CD4-positive, alpha-beta T cell (primary cell): ENCODE measurements at regions of chr9 and their contacts with region 1.

Region 1: DNA sequence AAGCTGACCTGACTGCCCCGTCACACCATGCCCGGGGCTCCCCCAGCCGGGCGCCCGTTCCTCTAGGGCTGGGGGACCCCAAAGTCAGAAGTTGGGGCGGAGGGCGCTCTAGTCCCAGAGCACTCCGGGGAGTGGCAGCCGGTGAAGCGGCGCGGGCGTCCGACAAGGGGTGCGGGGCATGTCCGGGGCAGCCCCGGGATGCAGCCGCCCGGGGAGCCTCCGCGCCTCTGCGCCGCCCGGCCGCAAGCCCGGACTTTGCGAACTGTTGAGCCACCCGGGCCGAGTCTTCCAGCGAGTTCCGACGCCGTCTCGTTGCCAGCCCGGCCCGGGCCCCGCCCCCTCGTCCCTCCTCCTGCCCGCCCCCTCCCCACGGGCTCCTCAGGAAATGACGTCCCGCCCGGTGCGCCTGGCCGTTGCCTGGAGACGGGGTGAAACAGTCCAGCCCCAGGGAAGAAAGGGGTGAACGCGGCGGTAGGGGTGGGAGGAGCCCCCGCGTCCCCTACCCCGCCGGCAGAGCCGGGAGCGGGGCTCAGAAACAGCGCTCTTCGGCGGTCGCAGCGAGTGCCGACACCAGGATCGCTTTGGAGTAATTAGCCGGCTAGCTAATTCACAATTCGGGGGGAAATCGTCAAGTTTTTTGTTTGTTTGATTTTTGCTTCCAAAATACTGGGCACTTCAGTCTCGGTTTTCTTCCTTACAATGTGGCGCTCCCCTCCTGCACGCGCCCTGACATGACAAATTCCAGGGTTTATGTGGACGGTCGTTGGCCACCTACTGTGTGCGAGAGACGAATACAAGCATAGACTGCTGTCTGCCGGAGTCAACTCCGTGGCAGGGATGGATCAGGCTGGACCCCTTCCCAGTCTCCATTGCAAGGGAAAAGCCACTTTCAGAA is at the start of gene WHRN:
- DNase-seq: peak; percentile 79 to 97 (median 88)
- ATAC-seq: peak; percentile 86
- H3K4me3 ChIP-seq: peak within 1 kb of the TSS; percentile 67
- H3K4me3 Mint-ChIP-seq: peak within 1 kb of the TSS; percentile 89
- H3K27ac ChIP-seq: peak within 1 kb of the TSS in 1 of 2 donors; percentile 46
- H3K27ac Mint-ChIP-seq: peak within 1 kb of the TSS; percentile 80
- H3K4me1 ChIP-seq: peaks cover 34% of the 10 kb centered on the region
- H3K4me1 Mint-ChIP-seq: peaks cover 37% of the 10 kb centered on the region
- H3K27me3 ChIP-seq: peaks cover 2 to 5% of the 10 kb centered on the region in 2 experiments
- H3K27me3 Mint-ChIP-seq: peaks cover 30% of the 10 kb centered on the region
- CTCF ChIP-seq: no peak
- total RNA-seq, gene WHRN: 19.9 to 20.5 TPM

Region 2: DNA sequence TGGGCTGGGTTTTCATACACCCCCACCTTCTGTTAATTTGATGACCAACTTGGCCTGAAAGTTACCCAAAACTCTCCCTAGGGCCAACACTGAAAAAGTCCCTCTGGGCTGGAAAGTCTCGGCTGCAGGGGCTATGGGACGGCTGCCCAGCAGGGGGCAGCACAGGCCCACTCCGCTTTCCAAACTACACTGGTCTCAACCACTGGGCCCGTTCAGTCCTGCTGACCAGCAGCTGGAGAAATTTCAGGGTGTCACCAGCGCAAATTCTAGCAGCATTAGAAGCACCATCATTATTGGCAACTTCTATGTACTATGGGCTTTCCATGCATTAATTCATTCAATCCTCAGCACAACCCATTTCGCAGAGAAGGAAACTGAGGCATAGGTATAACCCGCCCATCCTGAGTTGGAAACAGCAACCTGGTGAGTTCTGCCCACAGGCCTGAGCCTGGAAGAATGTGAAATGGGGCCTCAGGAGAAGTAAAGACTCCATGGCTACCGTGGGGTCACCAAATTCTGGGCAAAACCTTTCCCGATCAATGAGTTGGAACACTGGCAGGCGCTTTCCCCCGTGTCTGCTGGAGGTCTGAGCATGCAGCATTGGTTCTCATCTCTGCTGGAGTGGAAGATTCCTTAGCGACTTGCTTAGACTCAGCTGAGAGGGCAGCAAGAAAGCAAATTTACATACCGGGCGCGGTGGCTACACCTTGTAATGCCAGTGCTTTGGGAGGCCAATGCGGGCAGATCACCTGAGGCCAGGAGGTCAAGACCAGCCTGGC is 166.1 kb before region 1 on chr9:
- CTCF ChIA-PET with region 1: interaction called, 4 read pairs
- POLR2A ChIA-PET with region 1: no interaction called
- intact Hi-C with region 1: loop called (anchors 2 to 5 kb)
- DNase-seq: peak; percentile 23 to 75 (median 44)
- ATAC-seq: peak; percentile 67
- H3K4me3 ChIP-seq: no peak overlapping the region
- H3K4me3 Mint-ChIP-seq: no peak overlapping the region
- H3K27ac ChIP-seq: peak overlapping the region in 1 of 2 donors; percentile 40
- H3K27ac Mint-ChIP-seq: peak overlapping the region; percentile 62
- H3K4me1 ChIP-seq: peaks cover 11% of the 10 kb centered on the region
- H3K4me1 Mint-ChIP-seq: peaks cover 16% of the 10 kb centered on the region
- H3K27me3 ChIP-seq: no peaks in the 10 kb centered on the region
- H3K27me3 Mint-ChIP-seq: no peaks in the 10 kb centered on the region
- CTCF ChIP-seq: peak; percentile 89

Region 3: GRCh38 chr9:114397848-114398605 is 107.4 kb before region 1 on chr9:
- CTCF ChIA-PET with region 1: interaction called, 3 read pairs
- POLR2A ChIA-PET with region 1: no interaction called
- intact Hi-C with region 1: loop called in 1 of 2 experiments (anchors 1 kb)
- DNase-seq: peak; percentile 90 to 98 (median 96)
- ATAC-seq: peak; percentile 84
- H3K4me3 ChIP-seq: peak overlapping the region; percentile 99
- H3K4me3 Mint-ChIP-seq: peak overlapping the region; percentile 97
- H3K27ac ChIP-seq: peak overlapping the region; percentile 93 to 94
- H3K27ac Mint-ChIP-seq: peak overlapping the region; percentile 98
- H3K4me1 ChIP-seq: peaks cover 53% of the 10 kb centered on the region
- H3K4me1 Mint-ChIP-seq: peaks cover 45% of the 10 kb centered on the region
- H3K27me3 ChIP-seq: no peaks in the 10 kb centered on the region
- H3K27me3 Mint-ChIP-seq: no peaks in the 10 kb centered on the region
- CTCF ChIP-seq: no peak

Region 4: DNA sequence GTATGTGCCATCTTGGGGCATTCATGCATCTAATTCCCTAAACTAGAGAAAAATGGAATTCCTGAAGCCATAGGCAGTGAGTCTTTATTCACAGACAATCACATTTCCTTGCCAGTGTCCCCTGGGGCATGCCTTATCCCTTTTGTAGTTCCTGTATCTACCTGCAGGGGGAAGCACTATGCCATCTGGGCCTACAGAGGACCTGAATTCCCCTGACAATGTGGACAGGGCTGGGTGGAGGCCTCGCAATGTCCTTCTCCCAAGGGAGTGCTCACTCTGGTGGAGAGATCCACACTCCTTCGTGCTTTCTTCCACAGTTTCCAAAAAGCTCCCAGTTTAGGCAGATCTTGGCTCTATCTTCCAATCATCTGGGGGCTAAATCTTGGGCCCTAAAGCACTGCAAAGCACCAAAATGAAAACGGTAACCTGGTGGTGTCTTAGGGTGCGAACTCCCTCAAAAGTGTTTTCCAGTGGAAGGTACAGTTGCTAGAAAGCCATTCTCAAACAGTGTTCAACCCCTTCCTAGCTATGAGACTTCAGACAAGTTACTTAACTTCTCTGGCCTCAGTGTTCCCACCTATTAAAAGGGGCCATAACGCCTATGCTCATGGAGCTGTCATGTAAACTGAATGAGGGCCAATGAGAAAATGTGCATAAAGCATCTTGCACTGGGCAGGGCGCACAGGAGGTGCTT is 17.7 kb before region 1 on chr9:
- CTCF ChIA-PET with region 1: interaction called, 8 read pairs
- POLR2A ChIA-PET with region 1: interaction called, 4 read pairs
- intact Hi-C with region 1: loop called in 1 of 2 experiments (anchors 1 kb)
- DNase-seq: peak; percentile 32 to 86 (median 48)
- ATAC-seq: peak; percentile 90
- H3K4me3 ChIP-seq: no peak overlapping the region
- H3K4me3 Mint-ChIP-seq: no peak overlapping the region
- H3K27ac ChIP-seq: no peak overlapping the region
- H3K27ac Mint-ChIP-seq: no peak overlapping the region
- H3K4me1 ChIP-seq: peaks cover 22% of the 10 kb centered on the region
- H3K4me1 Mint-ChIP-seq: peaks cover 11% of the 10 kb centered on the region
- H3K27me3 ChIP-seq: no peaks in the 10 kb centered on the region
- H3K27me3 Mint-ChIP-seq: no peaks in the 10 kb centered on the region
- CTCF ChIP-seq: peak; percentile 85

Region 5: GRCh38 chr9:114906908-114907571 is 401.6 kb after region 1 on chr9:
- CTCF ChIA-PET with region 1: no interaction called
- POLR2A ChIA-PET with region 1: no interaction called
- intact Hi-C with region 1: loop called in 1 of 2 experiments (anchors 10 kb)
- DNase-seq: peak in 4 of 14 experiments; percentile 34 to 66 (median 56)
- ATAC-seq: no peak
- H3K4me3 ChIP-seq: no peak overlapping the region
- H3K4me3 Mint-ChIP-seq: no peak overlapping the region
- H3K27ac ChIP-seq: peak overlapping the region in 1 of 2 donors; percentile 7
- H3K27ac Mint-ChIP-seq: peak overlapping the region; percentile 85
- H3K4me1 ChIP-seq: peaks cover 84% of the 10 kb centered on the region
- H3K4me1 Mint-ChIP-seq: peaks cover 55% of the 10 kb centered on the region
- H3K27me3 ChIP-seq: no peaks in the 10 kb centered on the region
- H3K27me3 Mint-ChIP-seq: no peaks in the 10 kb centered on the region
- CTCF ChIP-seq: peak; percentile 69